ENCODE measurements at regions of chr7 and their contacts with region 1.

Region 1: DNA sequence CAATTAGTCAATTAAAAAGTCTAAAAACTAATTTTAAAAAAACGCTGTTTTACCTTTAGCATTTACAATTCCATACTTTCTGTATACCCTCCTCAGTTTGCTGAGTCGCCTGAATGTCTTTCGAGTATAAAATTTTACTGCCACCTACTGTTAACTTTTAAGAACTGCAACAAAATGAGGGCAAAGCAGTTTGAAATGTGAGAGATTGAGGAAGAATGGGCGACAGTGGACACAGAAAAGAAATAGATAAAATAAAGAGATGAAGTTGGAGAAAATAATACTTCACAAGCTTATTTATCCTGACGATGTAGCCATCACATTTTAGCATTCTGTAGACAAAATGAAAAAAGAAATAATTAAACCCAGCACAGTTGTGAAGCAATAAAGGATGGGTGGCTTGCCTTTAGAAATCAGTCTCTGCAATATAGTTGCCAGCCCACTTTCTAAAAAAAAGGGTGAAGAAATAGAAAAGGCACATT is 110.8 kb upstream of the PTN start:
- DNase-seq: no peak
- H3K4me3 Mint-ChIP-seq: no peak overlapping the region
- H3K27ac Mint-ChIP-seq: no peak overlapping the region
- H3K4me1 Mint-ChIP-seq: no peaks in the 10 kb centered on the region
- H3K27me3 Mint-ChIP-seq: peaks cover 7% of the 10 kb centered on the region

Region 2: GRCh38 chr7:136114966-136115762 is 1339.1 kb before region 1 on chr7:
- CTCF ChIA-PET with region 1: no interaction called
- intact Hi-C with region 1: loop called (anchors 1 kb)
- DNase-seq: peak; percentile 74
- H3K4me3 Mint-ChIP-seq: no peak overlapping the region
- H3K27ac Mint-ChIP-seq: no peak overlapping the region
- H3K4me1 Mint-ChIP-seq: no peaks in the 10 kb centered on the region
- H3K27me3 Mint-ChIP-seq: peaks cover 4% of the 10 kb centered on the region

Region 3: GRCh38 chr7:136405931-136406777 is 1048.1 kb before region 1 on chr7:
- CTCF ChIA-PET with region 1: interaction called, 3 read pairs
- intact Hi-C with region 1: loop called (anchors 1 kb)
- DNase-seq: peak; percentile 37
- H3K4me3 Mint-ChIP-seq: no peak overlapping the region
- H3K27ac Mint-ChIP-seq: no peak overlapping the region
- H3K4me1 Mint-ChIP-seq: peaks cover 5% of the 10 kb centered on the region
- H3K27me3 Mint-ChIP-seq: peaks cover 6% of the 10 kb centered on the region

Region 4: GRCh38 chr7:138137423-138138171 is 683.3 kb after region 1 on chr7:
- CTCF ChIA-PET with region 1: no interaction called
- intact Hi-C with region 1: no loop called
- DNase-seq: no peak
- H3K4me3 Mint-ChIP-seq: no peak overlapping the region
- H3K27ac Mint-ChIP-seq: no peak overlapping the region
- H3K4me1 Mint-ChIP-seq: no peaks in the 10 kb centered on the region
- H3K27me3 Mint-ChIP-seq: peaks cover 13% of the 10 kb centered on the region

Measured in activated naive CD4-positive, alpha-beta T cell treated with anti-CD3 and anti-CD28 coated beads for 36 hours (primary cell).